CD8-positive, alpha-beta T cell (primary cell): ENCODE measurements at regions of chr19 and their contacts with region 1.

Region 1: DNA sequence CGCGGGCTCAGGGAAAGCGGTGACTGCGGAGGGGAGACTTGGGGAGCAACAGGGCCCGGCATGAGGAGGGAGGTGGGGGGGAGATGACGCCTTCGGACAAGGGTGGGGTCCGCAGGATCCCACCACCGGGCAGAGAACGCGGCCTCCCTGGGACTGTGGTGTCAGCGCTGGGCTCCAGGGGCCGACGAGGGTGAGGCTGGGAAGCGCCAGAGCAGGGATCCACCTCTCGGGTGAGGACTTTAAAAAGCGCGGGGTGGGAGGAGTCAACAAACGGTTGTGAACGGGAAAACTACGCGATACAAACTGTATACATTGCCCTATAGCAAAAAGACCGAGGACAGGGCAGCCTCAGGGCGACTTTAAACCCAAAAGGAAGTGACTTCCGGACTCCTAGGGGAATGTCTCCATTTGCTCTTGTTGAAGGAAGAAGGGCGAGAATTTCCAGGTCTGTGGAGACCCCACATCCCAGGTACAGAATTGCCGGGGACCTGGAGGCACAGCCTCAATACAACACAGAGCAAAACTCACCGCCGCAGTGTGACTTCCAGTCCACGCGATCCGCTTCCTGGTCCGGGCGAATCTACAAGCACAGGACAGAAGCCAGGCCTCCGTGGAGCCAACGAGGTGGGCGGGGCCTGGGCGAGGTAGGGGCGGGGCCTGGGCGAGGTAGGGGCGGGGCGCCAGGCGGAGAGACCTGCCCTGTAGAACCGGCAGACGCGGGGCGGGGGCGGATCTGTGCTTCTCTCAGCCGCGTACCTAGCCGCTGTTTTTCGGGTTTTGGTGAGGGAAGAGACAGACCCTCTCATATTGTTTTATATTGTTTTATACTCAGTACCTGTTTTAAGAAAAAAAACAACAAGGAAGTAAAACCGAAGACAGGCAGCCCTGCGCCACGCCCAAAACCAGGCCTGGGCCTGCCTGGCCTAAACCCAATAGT is at the start of gene ZNF888:
- DNase-seq: peak; percentile 74 to 90 (median 82)
- ATAC-seq: peak; percentile 100
- H3K4me3 ChIP-seq: peak within 1 kb of the TSS; percentile 93 to 97
- H3K4me3 Mint-ChIP-seq: peak within 1 kb of the TSS; percentile 94
- H3K27ac ChIP-seq: peak within 1 kb of the TSS; percentile 62 to 75
- H3K27ac Mint-ChIP-seq: peak within 1 kb of the TSS; percentile 90
- H3K4me1 ChIP-seq: peaks cover 14% of the 10 kb centered on the region
- H3K4me1 Mint-ChIP-seq: peaks cover 33% of the 10 kb centered on the region
- H3K27me3 ChIP-seq: no peaks in the 10 kb centered on the region
- H3K27me3 Mint-ChIP-seq: no peaks in the 10 kb centered on the region
- CTCF ChIP-seq: no peak
- total RNA-seq, gene ZNF888: 4.5 to 4.9 TPM

Region 2: GRCh38 chr19:52910648-52911047 is 12.5 kb before region 1 on chr19:
- CTCF ChIA-PET with region 1: no interaction called
- POLR2A ChIA-PET with region 1: no interaction called
- intact Hi-C with region 1: no loop called
- DNase-seq: no peak
- ATAC-seq: no peak
- H3K4me3 ChIP-seq: no peak overlapping the region
- H3K4me3 Mint-ChIP-seq: no peak overlapping the region
- H3K27ac ChIP-seq: no peak overlapping the region
- H3K27ac Mint-ChIP-seq: no peak overlapping the region
- H3K4me1 ChIP-seq: no peaks in the 10 kb centered on the region
- H3K4me1 Mint-ChIP-seq: no peaks in the 10 kb centered on the region
- H3K27me3 ChIP-seq: no peaks in the 10 kb centered on the region
- H3K27me3 Mint-ChIP-seq: no peaks in the 10 kb centered on the region
- CTCF ChIP-seq: no peak

Region 3: GRCh38 chr19:52942386-52943133 is 19.5 kb after region 1 on chr19:
- CTCF ChIA-PET with region 1: no interaction called
- POLR2A ChIA-PET with region 1: no interaction called
- intact Hi-C with region 1: loop called (anchors 1 kb)
- DNase-seq: peak; percentile 91 to 97 (median 95)
- ATAC-seq: peak; percentile 99
- H3K4me3 ChIP-seq: peak overlapping the region; percentile 88 to 91
- H3K4me3 Mint-ChIP-seq: peak overlapping the region; percentile 95
- H3K27ac ChIP-seq: peak overlapping the region; percentile 66 to 86
- H3K27ac Mint-ChIP-seq: peak overlapping the region; percentile 93
- H3K4me1 ChIP-seq: peaks cover 7% of the 10 kb centered on the region
- H3K4me1 Mint-ChIP-seq: peaks cover 28% of the 10 kb centered on the region
- H3K27me3 ChIP-seq: no peaks in the 10 kb centered on the region
- H3K27me3 Mint-ChIP-seq: no peaks in the 10 kb centered on the region
- CTCF ChIP-seq: no peak

Region 4: DNA sequence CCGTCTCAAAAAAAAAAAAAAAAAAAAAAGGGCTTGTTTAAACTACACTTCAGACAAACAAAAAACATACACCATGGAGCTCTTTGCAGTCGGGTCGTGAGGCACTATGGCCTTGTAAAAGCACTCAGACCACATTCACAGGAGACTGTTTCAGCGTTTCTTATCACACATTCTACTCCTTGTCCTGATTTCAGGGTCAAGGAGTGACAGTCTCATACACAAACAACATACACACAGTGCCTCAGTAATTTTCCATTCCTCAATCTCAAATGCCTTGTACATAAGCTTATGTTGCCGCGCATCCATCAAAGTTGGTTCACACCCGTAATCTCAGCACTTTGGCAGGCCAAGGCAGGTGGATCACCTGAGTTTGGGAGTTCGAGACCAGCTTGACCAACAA is 51.6 kb after region 1 on chr19:
- CTCF ChIA-PET with region 1: no interaction called
- POLR2A ChIA-PET with region 1: no interaction called
- intact Hi-C with region 1: no loop called
- DNase-seq: no peak
- ATAC-seq: no peak
- H3K4me3 ChIP-seq: no peak overlapping the region
- H3K4me3 Mint-ChIP-seq: no peak overlapping the region
- H3K27ac ChIP-seq: no peak overlapping the region
- H3K27ac Mint-ChIP-seq: no peak overlapping the region
- H3K4me1 ChIP-seq: no peaks in the 10 kb centered on the region
- H3K4me1 Mint-ChIP-seq: no peaks in the 10 kb centered on the region
- H3K27me3 ChIP-seq: no peaks in the 10 kb centered on the region
- H3K27me3 Mint-ChIP-seq: no peaks in the 10 kb centered on the region
- CTCF ChIP-seq: no peak

Region 5: DNA sequence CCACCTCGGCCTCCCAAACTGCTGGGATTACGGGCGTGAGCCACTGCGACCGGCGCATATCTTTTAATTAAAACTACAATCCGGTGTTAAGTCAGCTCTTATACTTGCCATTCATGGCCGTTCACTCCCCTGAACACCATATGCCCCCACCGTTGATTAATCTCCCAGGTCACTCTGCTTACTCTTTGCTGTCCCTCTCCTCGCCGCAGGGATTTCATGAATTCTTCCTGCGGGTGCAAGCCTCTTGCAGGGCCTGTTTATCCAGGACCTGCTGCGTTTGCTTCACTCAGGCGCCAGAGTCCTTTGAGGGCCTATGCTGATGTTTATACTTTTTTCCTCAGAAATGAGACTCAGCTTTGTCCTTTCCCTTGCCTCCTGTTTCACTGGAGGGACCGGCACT is 122.4 kb after region 1 on chr19:
- CTCF ChIA-PET with region 1: no interaction called
- POLR2A ChIA-PET with region 1: no interaction called
- intact Hi-C with region 1: no loop called
- DNase-seq: no peak
- ATAC-seq: no peak
- H3K4me3 ChIP-seq: no peak overlapping the region
- H3K4me3 Mint-ChIP-seq: no peak overlapping the region
- H3K27ac ChIP-seq: no peak overlapping the region
- H3K27ac Mint-ChIP-seq: no peak overlapping the region
- H3K4me1 ChIP-seq: no peaks in the 10 kb centered on the region
- H3K4me1 Mint-ChIP-seq: no peaks in the 10 kb centered on the region
- H3K27me3 ChIP-seq: no peaks in the 10 kb centered on the region
- H3K27me3 Mint-ChIP-seq: no peaks in the 10 kb centered on the region
- CTCF ChIP-seq: no peak

Region 6: DNA sequence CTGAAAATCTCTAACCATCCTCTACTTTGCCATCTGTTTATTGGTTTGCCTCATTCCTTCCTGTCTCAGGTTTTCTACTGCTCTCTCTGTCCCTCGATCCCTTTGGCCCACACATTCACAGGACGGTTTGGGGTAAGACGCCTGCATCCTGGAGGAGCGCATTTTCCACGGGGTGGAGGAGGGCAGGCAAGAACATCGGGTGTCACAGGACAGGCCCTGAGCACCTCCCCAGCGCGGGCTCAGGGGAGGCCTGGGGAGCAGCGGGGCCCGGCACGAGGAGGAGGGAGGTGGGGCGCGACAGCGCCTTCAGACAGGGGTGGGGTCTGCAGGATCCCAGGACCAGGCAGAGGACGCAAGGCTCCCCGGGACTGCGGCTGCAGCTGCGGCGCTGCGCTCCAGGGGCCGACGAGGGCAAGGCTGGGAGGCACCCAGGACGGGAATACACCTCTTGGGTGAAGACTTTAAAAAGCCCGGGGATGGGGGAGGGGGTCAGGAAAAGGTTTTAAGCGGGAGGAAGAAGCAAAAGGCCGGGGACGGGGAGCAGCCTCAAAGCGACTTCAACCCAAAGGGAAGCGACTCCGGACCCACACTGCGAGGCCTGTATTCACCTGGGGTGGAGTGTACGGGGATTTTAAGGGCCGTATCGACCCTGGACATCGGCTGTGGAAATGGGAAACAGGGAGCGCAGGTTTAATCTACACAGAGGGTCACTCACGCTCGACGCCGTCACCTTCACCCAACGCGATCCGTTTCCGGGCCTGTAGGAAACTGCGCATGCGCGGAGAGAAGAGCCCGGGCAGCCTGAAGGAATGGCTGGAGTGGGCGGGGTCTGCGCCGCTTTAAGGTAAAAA is 209.3 kb after region 1 on chr19 and contains the start of gene ZNF415:
- CTCF ChIA-PET with region 1: no interaction called
- POLR2A ChIA-PET with region 1: no interaction called
- intact Hi-C with region 1: no loop called
- DNase-seq: peak in 8 of 9 experiments; percentile 15 to 64 (median 46)
- ATAC-seq: peak; percentile 69
- H3K4me3 ChIP-seq: peak within 1 kb of the TSS; percentile 44
- H3K4me3 Mint-ChIP-seq: peak within 1 kb of the TSS; percentile 88
- H3K27ac ChIP-seq: peak within 1 kb of the TSS in 1 of 2 experiments; percentile 18
- H3K27ac Mint-ChIP-seq: peak within 1 kb of the TSS; percentile 78
- H3K4me1 ChIP-seq: no peaks in the 10 kb centered on the region
- H3K4me1 Mint-ChIP-seq: peaks cover 21% of the 10 kb centered on the region
- H3K27me3 ChIP-seq: peaks cover 0 to 8% of the 10 kb centered on the region in 2 experiments
- H3K27me3 Mint-ChIP-seq: peaks cover 7% of the 10 kb centered on the region
- CTCF ChIP-seq: no peak
- total RNA-seq, gene ZNF415: 1.1 to 1.2 TPM